Thyroid gland (tissue), 4 donors: ENCODE measurements at regions of chr1 and their contacts with region 1.

Region 1: GRCh38 chr1:208024406-208024805 is 113.5 kb upstream of the CD34 start:
- DNase-seq: no peak
- H3K4me3 ChIP-seq: no peak overlapping the region
- H3K27ac ChIP-seq: no peak overlapping the region
- H3K4me1 ChIP-seq: peaks cover 3 to 4% of the 10 kb centered on the region in 2 donors
- H3K27me3 ChIP-seq: no peaks in the 10 kb centered on the region
- CTCF ChIP-seq: no peak
- POLR2A ChIP-seq: no peak

Region 2: GRCh38 chr1:208093754-208094719 is 69.6 kb after region 1 on chr1:
- intact Hi-C with region 1: loop called (anchors 5 kb)
- DNase-seq: peak; percentile 80
- H3K4me3 ChIP-seq: no peak overlapping the region
- H3K27ac ChIP-seq: peak overlapping the region in 1 of 3 donors; percentile 31
- H3K4me1 ChIP-seq: peaks cover 17 to 21% of the 10 kb centered on the region in 2 donors
- H3K27me3 ChIP-seq: no peaks in the 10 kb centered on the region
- CTCF ChIP-seq: peak; percentile 62 to 83 (median 76)
- POLR2A ChIP-seq: no peak